GM13977 (cell line): ENCODE measurements at regions of chr3 and their contacts with region 1.

Region 1: GRCh38 chr3:47513125-47513929 is at the start of gene ELP6:
- DNase-seq: peak; percentile 93
- CTCF ChIP-seq: peak; percentile 79

Region 2: GRCh38 chr3:47989981-47990440 is 476.7 kb after region 1 on chr3:
- in situ Hi-C with region 1: loop called (anchors 25 kb)
- DNase-seq: peak; percentile 62
- CTCF ChIP-seq: peak; percentile 88